Transverse colon (tissue), 4 donors: ENCODE measurements at regions of chr2 and their contacts with region 1.

Region 1: DNA sequence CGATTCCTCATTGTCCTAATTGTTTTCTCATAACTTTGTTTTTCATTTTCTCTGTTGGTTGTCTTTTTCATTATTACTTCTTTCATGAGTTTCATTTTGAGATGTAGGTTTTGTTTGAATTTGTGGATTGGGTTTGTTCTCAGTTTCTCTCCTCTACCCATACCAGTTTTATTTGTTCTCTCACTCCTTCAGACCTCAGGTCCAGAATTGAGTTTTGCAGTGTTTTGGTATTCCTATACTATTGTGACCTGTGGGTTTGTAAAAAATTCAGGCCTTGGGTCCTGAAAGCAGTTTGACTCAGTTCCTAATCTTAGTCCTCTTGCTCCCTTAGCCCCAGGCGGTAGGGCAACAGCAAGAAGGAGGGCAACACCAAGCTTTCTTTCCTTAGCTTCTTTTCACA is 28.3 kb upstream of the UBE2E3 start:
- DNase-seq: no peak
- H3K4me3 ChIP-seq: no peak overlapping the region
- H3K27ac ChIP-seq: no peak overlapping the region
- H3K4me1 ChIP-seq: no peaks in the 10 kb centered on the region
- H3K27me3 ChIP-seq: no peaks in the 10 kb centered on the region
- CTCF ChIP-seq: no peak
- EP300 ChIP-seq: no peak
- POLR2A ChIP-seq: no peak

Region 2: DNA sequence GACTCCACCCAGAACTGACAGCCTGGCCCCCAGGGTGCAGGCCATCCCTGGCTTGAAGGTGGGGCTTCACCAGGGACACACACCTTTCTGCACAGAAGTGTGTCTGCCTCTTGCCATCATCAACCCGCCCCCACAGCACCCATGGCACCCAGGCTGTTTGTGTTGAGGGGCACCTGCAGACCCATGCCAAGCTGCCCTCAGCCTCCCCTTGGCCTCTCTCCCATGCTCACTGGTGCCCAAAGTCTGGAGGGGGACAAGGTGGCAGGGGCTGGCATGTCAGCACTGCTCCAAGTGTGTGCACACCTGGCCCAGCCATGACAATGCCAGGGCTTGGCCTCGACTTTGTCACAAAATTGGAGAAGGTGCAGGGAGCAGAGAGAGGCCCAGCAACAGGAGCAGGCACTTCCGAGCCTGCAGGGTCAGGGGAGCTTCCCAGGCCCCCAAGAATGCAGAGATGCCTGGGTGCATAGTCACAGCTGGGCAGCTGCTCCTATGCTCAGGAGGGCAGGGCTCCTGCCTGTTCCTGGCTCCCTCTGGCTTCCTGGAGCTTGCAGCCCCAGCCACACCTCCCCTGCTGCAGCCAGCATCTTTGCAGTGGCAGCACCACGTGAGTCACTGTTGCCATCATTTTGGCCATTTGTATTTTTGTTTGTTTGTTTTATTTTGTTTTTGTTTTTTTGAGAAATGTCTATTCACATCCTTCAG is 252.3 kb before region 1 on chr2:
- in situ Hi-C with region 1: no loop called
- intact Hi-C with region 1: no loop called
- DNase-seq: no peak
- H3K4me3 ChIP-seq: no peak overlapping the region
- H3K27ac ChIP-seq: no peak overlapping the region
- H3K4me1 ChIP-seq: peaks cover 0 to 6% (median 0%) of the 10 kb centered on the region in 4 donors
- H3K27me3 ChIP-seq: no peaks in the 10 kb centered on the region
- CTCF ChIP-seq: no peak
- EP300 ChIP-seq: no peak
- POLR2A ChIP-seq: no peak

Region 3: GRCh38 chr2:180983468-180984242 is 31.6 kb after region 1 on chr2:
- in situ Hi-C with region 1: no loop called
- intact Hi-C with region 1: loop called (anchors 1 kb)
- DNase-seq: peak; percentile 31
- H3K4me3 ChIP-seq: peak overlapping the region in 2 of 4 donors; percentile 3 to 4
- H3K27ac ChIP-seq: peak overlapping the region in 3 of 4 donors; percentile 25 to 59 (median 40)
- H3K4me1 ChIP-seq: peaks cover 14 to 51% (median 30%) of the 10 kb centered on the region in 4 donors
- H3K27me3 ChIP-seq: no peaks in the 10 kb centered on the region
- CTCF ChIP-seq: peak in 1 of 5 experiments; percentile 24
- EP300 ChIP-seq: no peak
- POLR2A ChIP-seq: no peak

Region 4: GRCh38 chr2:181036848-181037603 is 84.9 kb after region 1 on chr2:
- in situ Hi-C with region 1: no loop called
- intact Hi-C with region 1: no loop called
- DNase-seq: no peak
- H3K4me3 ChIP-seq: no peak overlapping the region
- H3K27ac ChIP-seq: no peak overlapping the region
- H3K4me1 ChIP-seq: no peaks in the 10 kb centered on the region
- H3K27me3 ChIP-seq: no peaks in the 10 kb centered on the region
- CTCF ChIP-seq: no peak
- EP300 ChIP-seq: no peak
- POLR2A ChIP-seq: no peak

Region 5: DNA sequence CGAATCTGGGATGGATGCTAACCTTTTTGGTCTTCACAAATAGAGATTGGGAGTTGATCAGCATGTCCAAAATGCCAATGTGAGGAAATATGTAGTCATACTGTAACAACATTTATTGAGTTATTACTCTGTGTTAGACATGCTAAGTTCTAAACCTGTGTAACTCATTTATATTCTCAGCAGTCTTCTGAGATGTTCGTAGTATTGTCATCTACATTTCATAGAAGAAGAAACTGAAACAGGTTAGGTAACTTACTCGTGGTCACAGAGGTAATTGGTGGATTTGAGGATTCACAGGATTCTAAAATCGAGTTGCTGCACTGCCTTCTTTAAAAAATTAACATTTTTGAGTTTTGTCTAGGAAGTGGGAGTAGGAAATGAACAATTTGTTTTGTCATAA is 190.4 kb after region 1 on chr2:
- in situ Hi-C with region 1: no loop called
- intact Hi-C with region 1: no loop called
- DNase-seq: no peak
- H3K4me3 ChIP-seq: no peak overlapping the region
- H3K27ac ChIP-seq: peak overlapping the region in 1 of 4 donors; percentile 46
- H3K4me1 ChIP-seq: no peaks in the 10 kb centered on the region
- H3K27me3 ChIP-seq: no peaks in the 10 kb centered on the region
- CTCF ChIP-seq: no peak
- EP300 ChIP-seq: no peak
- POLR2A ChIP-seq: no peak

Region 6: GRCh38 chr2:181178823-181179412 is 226.8 kb after region 1 on chr2:
- in situ Hi-C with region 1: no loop called
- intact Hi-C with region 1: no loop called
- DNase-seq: peak; percentile 26
- H3K4me3 ChIP-seq: no peak overlapping the region
- H3K27ac ChIP-seq: no peak overlapping the region
- H3K4me1 ChIP-seq: peaks cover 0 to 11% (median 5%) of the 10 kb centered on the region in 4 donors
- H3K27me3 ChIP-seq: no peaks in the 10 kb centered on the region
- CTCF ChIP-seq: peak in 4 of 5 experiments; percentile 19 to 38 (median 25)
- EP300 ChIP-seq: no peak
- POLR2A ChIP-seq: no peak